ENCODE measurements at regions of chr4 and their contacts with region 1.

Region 1: GRCh38 chr4:83012687-83013419 is 2.2 kb upstream of the LIN54 start:
- DNase-seq: peak; percentile 93 to 96
- ATAC-seq: peak; percentile 90
- H3K4me3 ChIP-seq: peak overlapping the region; percentile 70 to 94 (median 79)
- H3K27ac ChIP-seq: peak overlapping the region; percentile 90 to 96 (median 94)
- H3K4me1 ChIP-seq: peaks cover 27 to 33% of the 10 kb centered on the region in 2 donors
- H3K27me3 ChIP-seq: no peaks in the 10 kb centered on the region
- CTCF ChIP-seq: peak; percentile 37 to 64 (median 53)
- POLR2A ChIP-seq: peak; percentile 86 to 93

Region 2: DNA sequence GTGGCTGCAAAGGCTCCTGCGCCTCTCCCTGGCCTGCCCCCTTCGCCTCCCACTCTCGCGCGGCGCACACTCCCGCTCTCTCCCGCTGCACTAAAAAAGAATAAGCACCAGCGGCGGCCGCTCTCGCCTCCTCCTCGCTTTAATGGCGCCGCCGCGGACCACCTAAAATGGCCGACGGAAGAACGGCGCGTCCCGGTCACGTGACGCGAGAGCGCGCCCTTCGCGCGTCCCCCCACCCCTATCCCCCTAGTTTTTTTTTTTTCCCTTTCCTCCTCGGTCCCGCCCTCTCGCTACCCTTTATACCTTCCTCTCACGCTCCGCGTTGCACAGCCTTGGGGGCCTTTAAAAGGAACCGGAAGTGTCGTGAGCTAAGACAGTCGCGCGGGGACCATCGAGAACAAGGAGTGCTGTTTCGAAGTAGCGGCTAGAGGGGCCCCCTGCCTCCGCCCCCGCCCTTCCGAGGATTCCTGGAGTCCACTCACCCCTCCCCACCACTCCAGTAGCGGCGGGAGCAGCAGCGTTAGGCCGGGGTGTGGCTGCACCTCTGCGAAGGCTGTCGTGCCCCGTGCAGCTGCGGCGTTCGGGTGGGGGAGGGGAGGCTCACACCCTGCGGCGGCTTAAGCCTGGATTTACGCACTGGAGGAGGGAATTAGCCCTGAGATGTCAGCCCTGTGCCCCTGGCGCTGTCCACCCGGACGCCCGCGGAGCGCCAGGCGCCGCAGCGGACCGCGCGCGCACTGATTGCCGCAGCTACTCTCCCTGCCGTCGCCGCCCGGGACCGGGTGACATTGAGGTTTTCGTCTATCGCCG is 638.8 kb before region 1 on chr4 and contains the start of gene HNRNPD:
- in situ Hi-C with region 1: no loop called
- intact Hi-C with region 1: loop called (anchors 1 kb)
- DNase-seq: peak; percentile 97 to 99
- ATAC-seq: peak; percentile 90 to 91
- H3K4me3 ChIP-seq: peak within 1 kb of the TSS; percentile 82 to 99 (median 96)
- H3K27ac ChIP-seq: peak within 1 kb of the TSS; percentile 99 to 100 (median 100)
- H3K4me1 ChIP-seq: peaks cover 42 to 44% of the 10 kb centered on the region in 2 donors
- H3K27me3 ChIP-seq: no peaks in the 10 kb centered on the region
- CTCF ChIP-seq: peak in 2 of 5 experiments; percentile 20 to 21
- POLR2A ChIP-seq: peak; percentile 92 to 95
- total RNA-seq, gene HNRNPD: 26.9 to 46.0 (median 37.4) TPM

Region 3: GRCh38 chr4:82500106-82500965 is 512.5 kb before region 1 on chr4:
- in situ Hi-C with region 1: no loop called
- intact Hi-C with region 1: no loop called
- DNase-seq: no peak
- ATAC-seq: no peak
- H3K4me3 ChIP-seq: no peak overlapping the region
- H3K27ac ChIP-seq: no peak overlapping the region
- H3K4me1 ChIP-seq: no peaks in the 10 kb centered on the region
- H3K27me3 ChIP-seq: no peaks in the 10 kb centered on the region
- CTCF ChIP-seq: no peak
- POLR2A ChIP-seq: no peak

Region 4: GRCh38 chr4:82890901-82891706 is 121.7 kb before region 1 on chr4 and contains the start of gene SEC31A:
- in situ Hi-C with region 1: loop called in 1 of 4 experiments (anchors 10 kb)
- intact Hi-C with region 1: loop called (anchors 1 kb)
- DNase-seq: peak; percentile 92 to 94
- ATAC-seq: peak; percentile 93 to 95
- H3K4me3 ChIP-seq: peak within 1 kb of the TSS; percentile 85 to 96 (median 88)
- H3K27ac ChIP-seq: peak within 1 kb of the TSS; percentile 96 to 97 (median 96)
- H3K4me1 ChIP-seq: peaks cover 32 to 34% of the 10 kb centered on the region in 2 donors
- H3K27me3 ChIP-seq: no peaks in the 10 kb centered on the region
- CTCF ChIP-seq: peak in 1 of 5 experiments; percentile 22
- POLR2A ChIP-seq: peak; percentile 93
- total RNA-seq, gene SEC31A: 95.2 to 112 (median 105) TPM

Region 5: DNA sequence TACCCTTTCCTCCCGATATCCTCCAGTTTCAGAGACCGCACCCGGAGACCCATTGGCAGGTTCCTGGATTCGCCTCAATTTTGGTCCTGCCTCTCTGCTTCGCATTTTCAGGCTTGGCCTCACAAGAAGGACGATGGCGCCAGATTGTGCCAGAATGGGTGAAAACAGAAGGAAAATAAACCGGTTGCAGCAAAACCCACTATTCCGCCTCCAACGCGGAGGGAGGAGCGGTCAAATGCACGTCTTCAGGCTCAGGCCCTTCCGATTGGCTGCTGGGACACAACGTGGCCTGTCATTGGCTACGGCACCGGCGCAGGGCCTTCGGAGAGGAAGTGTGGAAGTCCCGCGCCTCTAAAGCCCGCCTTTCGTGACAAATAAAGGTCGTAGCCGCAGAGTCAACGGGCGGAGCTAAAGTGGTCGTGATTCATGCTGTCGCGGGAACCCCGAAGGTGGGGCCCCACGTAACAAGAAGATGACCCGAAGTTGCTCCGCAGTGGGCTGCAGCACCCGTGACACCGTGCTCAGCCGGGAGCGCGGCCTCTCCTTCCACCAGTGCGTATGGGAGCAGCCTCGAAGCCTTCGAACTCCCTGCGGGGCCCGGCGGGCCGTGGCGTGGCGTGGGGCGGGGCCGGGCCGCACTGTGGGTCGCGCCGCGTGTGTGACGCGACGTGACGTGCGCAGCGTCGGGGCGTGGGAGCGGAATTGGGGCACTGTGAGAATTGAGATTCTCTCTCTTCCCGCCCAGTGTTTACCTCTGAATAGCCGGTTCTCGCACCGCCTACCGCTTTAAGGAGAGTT is 112.3 kb before region 1 on chr4 and contains the start of gene THAP9:
- in situ Hi-C with region 1: loop called in 1 of 4 experiments (anchors 10 kb)
- intact Hi-C with region 1: loop called (anchors 1 kb)
- DNase-seq: peak; percentile 99
- ATAC-seq: peak; percentile 96
- H3K4me3 ChIP-seq: peak within 1 kb of the TSS; percentile 65 to 92 (median 82)
- H3K27ac ChIP-seq: peak within 1 kb of the TSS; percentile 94 to 98 (median 96)
- H3K4me1 ChIP-seq: peaks cover 32 to 34% of the 10 kb centered on the region in 2 donors
- H3K27me3 ChIP-seq: no peaks in the 10 kb centered on the region
- CTCF ChIP-seq: no peak
- POLR2A ChIP-seq: peak; percentile 78 to 89
- total RNA-seq, gene THAP9: 7.6 to 11.1 (median 8.4) TPM

Region 6: GRCh38 chr4:83067058-83067639 is 54.3 kb after region 1 on chr4:
- in situ Hi-C with region 1: no loop called
- intact Hi-C with region 1: no loop called
- DNase-seq: no peak
- ATAC-seq: peak in 1 of 2 donors; percentile 84
- H3K4me3 ChIP-seq: no peak overlapping the region
- H3K27ac ChIP-seq: peak overlapping the region in 1 of 4 donors; percentile 46
- H3K4me1 ChIP-seq: no peaks in the 10 kb centered on the region
- H3K27me3 ChIP-seq: no peaks in the 10 kb centered on the region
- CTCF ChIP-seq: no peak
- POLR2A ChIP-seq: no peak

Region 7: GRCh38 chr4:83110223-83110945 is 97.5 kb after region 1 on chr4:
- in situ Hi-C with region 1: no loop called
- intact Hi-C with region 1: loop called (anchors 5 kb)
- DNase-seq: peak; percentile 60 to 70
- ATAC-seq: peak; percentile 90 to 95
- H3K4me3 ChIP-seq: peak overlapping the region; percentile 57 to 66 (median 58)
- H3K27ac ChIP-seq: peak overlapping the region in 3 of 4 donors; percentile 16 to 43 (median 20)
- H3K4me1 ChIP-seq: peaks cover 4% of the 10 kb centered on the region in 2 donors
- H3K27me3 ChIP-seq: no peaks in the 10 kb centered on the region
- CTCF ChIP-seq: peak in 3 of 5 experiments; percentile 4 to 64 (median 49)
- POLR2A ChIP-seq: no peak

Measured in gastrocnemius medialis (tissue), 4 donors.